Naive thymus-derived CD4-positive, alpha-beta T cell (primary cell): ENCODE measurements at regions of chr14 and their contacts with region 1.

Region 1: DNA sequence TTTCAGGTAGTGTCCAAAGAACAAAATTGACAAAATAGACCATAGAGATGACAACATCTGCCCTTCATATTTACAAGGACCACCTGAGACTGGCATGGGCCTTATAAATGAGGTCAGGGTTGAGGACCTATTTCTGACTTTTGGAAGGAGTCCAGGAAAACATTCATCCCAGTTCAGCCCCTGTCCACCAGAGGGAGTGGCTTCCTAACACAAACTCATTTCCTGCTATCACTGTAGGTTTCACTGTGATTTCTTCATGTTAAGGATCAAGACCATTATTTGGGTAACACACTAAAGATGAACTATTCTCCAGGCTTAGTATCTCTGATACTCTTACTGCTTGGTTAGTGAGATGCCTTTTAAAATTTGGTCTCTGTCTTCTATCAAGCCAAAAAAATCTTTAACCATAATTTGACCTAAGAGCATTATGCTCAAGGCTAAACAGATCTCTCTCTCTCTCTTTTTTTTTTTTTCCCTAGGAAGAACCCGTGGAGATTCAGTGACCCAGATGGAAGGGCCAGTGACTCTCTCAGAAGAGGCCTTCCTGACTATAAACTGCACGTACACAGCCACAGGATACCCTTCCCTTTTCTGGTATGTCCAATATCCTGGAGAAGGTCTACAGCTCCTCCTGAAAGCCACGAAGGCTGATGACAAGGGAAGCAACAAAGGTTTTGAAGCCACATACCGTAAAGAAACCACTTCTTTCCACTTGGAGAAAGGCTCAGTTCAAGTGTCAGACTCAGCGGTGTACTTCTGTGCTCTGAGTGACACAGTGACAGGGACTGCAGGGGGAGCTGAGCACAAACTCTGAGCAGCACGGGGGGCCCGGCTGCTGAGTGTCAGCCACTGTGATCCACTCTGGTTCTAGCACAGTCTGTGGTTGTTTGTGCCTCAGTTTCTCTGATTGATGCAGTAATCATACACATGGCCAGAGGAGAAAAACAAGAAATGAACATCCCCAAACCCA is 267.6 kb upstream of the OR4E1 start:
- DNase-seq: peak in 7 of 9 donors; percentile 42 to 56 (median 51)
- ATAC-seq: peak; percentile 78
- H3K4me3 ChIP-seq: peak overlapping the region; percentile 30
- H3K4me3 Mint-ChIP-seq: peak overlapping the region; percentile 63 to 88 (median 78)
- H3K27ac ChIP-seq: peak overlapping the region; percentile 56
- H3K27ac Mint-ChIP-seq: peak overlapping the region; percentile 79 to 95 (median 90)
- H3K4me1 ChIP-seq: peaks cover 0 to 8% of the 10 kb centered on the region in 2 donors
- H3K4me1 Mint-ChIP-seq: peaks cover 5 to 48% (median 31%) of the 10 kb centered on the region in 7 donors
- H3K27me3 ChIP-seq: no peaks in the 10 kb centered on the region
- H3K27me3 Mint-ChIP-seq: peaks cover 0 to 33% (median 0%) of the 10 kb centered on the region in 5 donors

Region 2: GRCh38 chr14:21024585-21025370 is 916.4 kb before region 1 on chr14 and contains the start of gene NDRG2:
- CTCF ChIA-PET with region 1: no interaction called
- POLR2A ChIA-PET with region 1: no interaction called
- intact Hi-C with region 1: no loop called
- DNase-seq: peak; percentile 50 to 78 (median 67)
- ATAC-seq: peak; percentile 93
- H3K4me3 ChIP-seq: peak within 1 kb of the TSS; percentile 70
- H3K4me3 Mint-ChIP-seq: peak within 1 kb of the TSS; percentile 84 to 97 (median 92)
- H3K27ac ChIP-seq: peak within 1 kb of the TSS; percentile 70
- H3K27ac Mint-ChIP-seq: peak within 1 kb of the TSS in 8 of 9 donors; percentile 66 to 92 (median 80)
- H3K4me1 ChIP-seq: peaks cover 7 to 13% of the 10 kb centered on the region in 2 donors
- H3K4me1 Mint-ChIP-seq: peaks cover 7 to 28% (median 23%) of the 10 kb centered on the region in 7 donors
- H3K27me3 ChIP-seq: no peaks in the 10 kb centered on the region
- H3K27me3 Mint-ChIP-seq: peaks cover 0 to 47% (median 0%) of the 10 kb centered on the region in 5 donors
- total RNA-seq, gene NDRG2: 5.9 to 39.9 (median 35.2) TPM

Region 3: DNA sequence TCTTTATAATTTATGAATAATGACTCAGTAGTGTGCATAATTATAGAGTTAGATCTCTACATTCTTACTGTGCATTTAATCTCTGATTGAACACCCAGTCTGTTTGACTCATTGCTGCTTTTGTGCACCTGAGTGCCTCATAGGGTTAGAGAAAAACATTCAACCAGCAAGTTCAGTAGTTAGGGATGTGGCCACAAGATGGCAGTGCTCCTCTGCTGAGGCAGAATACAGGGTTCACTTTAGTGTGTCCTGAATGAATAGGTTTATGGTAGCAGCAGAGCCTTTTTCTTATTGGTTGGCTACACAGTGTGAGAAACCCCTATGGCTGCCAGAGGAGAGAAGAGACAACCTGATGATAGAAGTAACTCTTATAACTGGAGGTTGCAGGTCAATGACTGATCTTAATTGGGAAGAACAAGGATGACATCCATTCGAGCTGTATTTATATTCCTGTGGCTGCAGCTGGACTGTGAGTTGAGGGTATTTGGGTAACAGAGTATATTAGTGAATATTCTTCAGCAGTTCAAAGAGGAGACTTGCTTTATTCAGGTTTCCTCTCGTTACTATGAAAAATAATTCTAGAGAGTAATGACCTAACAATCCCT is 72.6 kb before region 1 on chr14:
- CTCF ChIA-PET with region 1: no interaction called
- POLR2A ChIA-PET with region 1: no interaction called
- intact Hi-C with region 1: no loop called
- DNase-seq: peak; percentile 33 to 79 (median 70)
- ATAC-seq: peak; percentile 97
- H3K4me3 ChIP-seq: peak overlapping the region; percentile 16
- H3K4me3 Mint-ChIP-seq: peak overlapping the region; percentile 18 to 85 (median 74)
- H3K27ac ChIP-seq: peak overlapping the region; percentile 25
- H3K27ac Mint-ChIP-seq: peak overlapping the region; percentile 8 to 88 (median 59)
- H3K4me1 ChIP-seq: peaks cover 4 to 8% of the 10 kb centered on the region in 2 donors
- H3K4me1 Mint-ChIP-seq: peaks cover 3 to 54% (median 25%) of the 10 kb centered on the region in 7 donors
- H3K27me3 ChIP-seq: peaks cover 0 to 3% of the 10 kb centered on the region in 2 donors
- H3K27me3 Mint-ChIP-seq: peaks cover 0 to 6% (median 0%) of the 10 kb centered on the region in 5 donors

Region 4: DNA sequence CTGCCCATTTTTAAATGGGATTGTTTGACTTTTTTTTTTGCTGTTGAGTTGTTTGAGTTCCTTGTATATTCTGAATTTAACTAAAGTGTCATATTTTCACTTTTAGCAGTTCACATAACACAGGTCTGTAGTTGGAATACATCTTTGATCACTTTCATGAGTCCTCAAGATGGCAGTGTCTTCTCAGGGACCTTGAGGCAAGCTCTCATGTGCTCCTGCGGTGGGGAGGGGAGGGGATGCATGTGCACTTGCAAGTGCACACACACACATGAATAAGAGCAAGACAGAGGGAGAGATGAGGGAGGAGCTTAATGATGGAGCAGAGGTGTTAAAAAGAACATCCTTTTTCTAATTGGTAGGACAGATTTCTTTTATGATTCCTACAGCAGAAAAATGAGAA is 23.9 kb after region 1 on chr14:
- CTCF ChIA-PET with region 1: interaction called, 5 read pairs
- POLR2A ChIA-PET with region 1: no interaction called
- intact Hi-C with region 1: loop called in 1 of 2 experiments (anchors 2 kb)
- DNase-seq: peak in 8 of 9 donors; percentile 21 to 72 (median 61)
- ATAC-seq: peak; percentile 88
- H3K4me3 ChIP-seq: no peak overlapping the region
- H3K4me3 Mint-ChIP-seq: peak overlapping the region; percentile 50 to 78 (median 70)
- H3K27ac ChIP-seq: no peak overlapping the region
- H3K27ac Mint-ChIP-seq: peak overlapping the region; percentile 12 to 90 (median 78)
- H3K4me1 ChIP-seq: no peaks in the 10 kb centered on the region
- H3K4me1 Mint-ChIP-seq: peaks cover 8 to 48% (median 33%) of the 10 kb centered on the region in 7 donors
- H3K27me3 ChIP-seq: no peaks in the 10 kb centered on the region
- H3K27me3 Mint-ChIP-seq: peaks cover 0 to 12% (median 0%) of the 10 kb centered on the region in 5 donors

Region 5: GRCh38 chr14:22084393-22085281 is 143.5 kb after region 1 on chr14:
- CTCF ChIA-PET with region 1: no interaction called
- POLR2A ChIA-PET with region 1: no interaction called
- intact Hi-C with region 1: no loop called
- DNase-seq: peak in 6 of 9 donors; percentile 37 to 62 (median 52)
- ATAC-seq: peak; percentile 76
- H3K4me3 ChIP-seq: no peak overlapping the region
- H3K4me3 Mint-ChIP-seq: peak overlapping the region; percentile 41 to 76 (median 62)
- H3K27ac ChIP-seq: no peak overlapping the region
- H3K27ac Mint-ChIP-seq: peak overlapping the region; percentile 60 to 87 (median 75)
- H3K4me1 ChIP-seq: peaks cover 0 to 4% of the 10 kb centered on the region in 2 donors
- H3K4me1 Mint-ChIP-seq: peaks cover 2 to 40% (median 36%) of the 10 kb centered on the region in 7 donors
- H3K27me3 ChIP-seq: no peaks in the 10 kb centered on the region
- H3K27me3 Mint-ChIP-seq: no peaks in the 10 kb centered on the region

Region 6: DNA sequence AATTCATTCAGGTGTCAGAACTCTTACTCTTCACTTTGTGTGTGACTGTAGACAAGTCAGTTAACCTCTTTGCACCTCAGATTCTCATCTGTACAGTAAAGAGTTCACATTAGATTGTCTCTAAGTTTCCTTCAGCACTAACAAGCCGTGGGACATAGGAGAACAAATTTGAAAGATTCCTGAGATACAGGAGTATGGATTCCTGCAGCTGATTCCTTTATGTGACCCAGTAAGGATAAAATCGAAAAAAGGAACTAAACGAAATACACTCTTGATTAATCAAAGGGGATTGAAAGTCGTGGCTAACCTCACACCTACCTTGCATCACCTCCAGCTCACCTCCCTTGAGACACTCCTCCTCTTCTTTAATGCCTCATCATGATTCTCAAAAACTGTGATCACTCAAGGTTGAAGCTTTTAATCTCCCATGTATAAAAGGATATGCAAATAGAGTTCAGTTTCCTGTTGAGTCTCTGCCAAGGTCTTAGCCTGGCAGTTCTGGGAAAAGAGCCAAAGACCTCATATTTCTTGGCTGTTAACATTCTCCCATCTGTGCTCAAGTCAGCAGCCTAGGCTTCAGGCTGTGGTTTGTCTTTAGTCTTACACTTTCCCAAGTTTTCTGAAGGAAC is 491.3 kb after region 1 on chr14:
- CTCF ChIA-PET with region 1: no interaction called
- POLR2A ChIA-PET with region 1: no interaction called
- intact Hi-C with region 1: no loop called
- DNase-seq: peak in 1 of 9 donors; percentile 2
- ATAC-seq: peak; percentile 55
- H3K4me3 ChIP-seq: no peak overlapping the region
- H3K4me3 Mint-ChIP-seq: no peak overlapping the region
- H3K27ac ChIP-seq: no peak overlapping the region
- H3K27ac Mint-ChIP-seq: no peak overlapping the region
- H3K4me1 ChIP-seq: no peaks in the 10 kb centered on the region
- H3K4me1 Mint-ChIP-seq: peaks cover 0 to 15% (median 0%) of the 10 kb centered on the region in 7 donors
- H3K27me3 ChIP-seq: no peaks in the 10 kb centered on the region
- H3K27me3 Mint-ChIP-seq: no peaks in the 10 kb centered on the region